AG04450 (cell line): ENCODE measurements at regions of chr1 and their contacts with region 1.

Region 1: GRCh38 chr1:205977402-205978014 is 25.7 kb downstream of the RAB7B start:
- DNase-seq: peak; percentile 65
- H3K4me3 ChIP-seq: no peak overlapping the region
- H3K27ac ChIP-seq: no peak overlapping the region
- H3K27me3 ChIP-seq: no peaks in the 10 kb centered on the region
- CTCF ChIP-seq: peak; percentile 98

Region 2: GRCh38 chr1:204714861-204715511 is 1262.5 kb before region 1 on chr1:
- CTCF ChIA-PET with region 1: no interaction called
- POLR2A ChIA-PET with region 1: no interaction called
- DNase-seq: no peak
- H3K4me3 ChIP-seq: no peak overlapping the region
- H3K27ac ChIP-seq: no peak overlapping the region
- H3K27me3 ChIP-seq: peaks cover 34% of the 10 kb centered on the region
- CTCF ChIP-seq: no peak

Region 3: GRCh38 chr1:205658943-205659581 is 318.4 kb before region 1 on chr1:
- CTCF ChIA-PET with region 1: interaction called, 163 read pairs
- POLR2A ChIA-PET with region 1: interaction called, 6 read pairs
- DNase-seq: no peak
- H3K4me3 ChIP-seq: no peak overlapping the region
- H3K27ac ChIP-seq: no peak overlapping the region
- H3K27me3 ChIP-seq: no peaks in the 10 kb centered on the region
- CTCF ChIP-seq: peak; percentile 88

Region 4: DNA sequence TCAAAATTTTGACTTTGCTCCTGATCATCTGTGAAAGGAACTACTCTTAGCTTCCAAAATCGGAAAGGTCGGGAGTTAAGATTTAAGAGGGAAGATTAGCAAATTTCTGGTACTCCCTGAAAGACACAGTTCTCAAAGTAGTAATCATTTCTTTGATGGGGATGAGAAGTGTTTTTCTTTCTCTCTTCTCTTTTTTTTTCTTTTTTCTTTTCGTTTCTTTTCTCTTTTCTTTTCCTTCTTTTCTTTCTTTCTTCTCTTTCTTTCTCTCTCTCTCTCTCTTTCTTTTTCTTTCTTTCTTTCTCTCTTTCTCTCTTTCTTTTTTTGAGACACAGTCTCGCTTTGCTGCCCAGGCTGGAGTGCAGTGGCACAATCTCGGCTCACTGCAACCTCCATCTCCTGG is 197.2 kb before region 1 on chr1:
- CTCF ChIA-PET with region 1: interaction called, 42 read pairs
- POLR2A ChIA-PET with region 1: interaction called, 5 read pairs
- DNase-seq: no peak
- H3K4me3 ChIP-seq: no peak overlapping the region
- H3K27ac ChIP-seq: no peak overlapping the region
- H3K27me3 ChIP-seq: peaks cover 2% of the 10 kb centered on the region
- CTCF ChIP-seq: no peak

Region 5: DNA sequence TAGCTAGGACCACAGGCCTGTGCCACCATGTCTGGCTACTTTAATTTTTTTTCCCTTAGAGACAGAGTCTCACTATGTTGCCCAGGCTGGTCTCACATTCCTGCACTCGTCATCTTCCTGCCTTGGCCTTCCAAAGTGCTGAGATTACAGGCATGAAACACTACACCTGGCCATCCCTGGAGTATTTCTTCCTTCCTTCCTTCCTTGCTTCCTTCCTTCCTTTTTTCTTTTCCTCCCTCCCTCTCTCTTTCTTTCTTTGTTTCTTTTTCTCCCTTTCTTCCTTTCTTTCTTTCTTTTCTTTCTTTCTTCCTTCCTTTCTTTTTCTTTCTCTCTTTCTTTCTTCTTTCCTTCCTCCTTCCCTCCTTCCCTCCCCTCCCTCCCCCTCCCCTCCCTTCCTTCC is 81.2 kb before region 1 on chr1:
- CTCF ChIA-PET with region 1: interaction called, 10 read pairs
- POLR2A ChIA-PET with region 1: no interaction called
- DNase-seq: no peak
- H3K4me3 ChIP-seq: no peak overlapping the region
- H3K27ac ChIP-seq: no peak overlapping the region
- H3K27me3 ChIP-seq: peaks cover 2% of the 10 kb centered on the region
- CTCF ChIP-seq: no peak

Region 6: DNA sequence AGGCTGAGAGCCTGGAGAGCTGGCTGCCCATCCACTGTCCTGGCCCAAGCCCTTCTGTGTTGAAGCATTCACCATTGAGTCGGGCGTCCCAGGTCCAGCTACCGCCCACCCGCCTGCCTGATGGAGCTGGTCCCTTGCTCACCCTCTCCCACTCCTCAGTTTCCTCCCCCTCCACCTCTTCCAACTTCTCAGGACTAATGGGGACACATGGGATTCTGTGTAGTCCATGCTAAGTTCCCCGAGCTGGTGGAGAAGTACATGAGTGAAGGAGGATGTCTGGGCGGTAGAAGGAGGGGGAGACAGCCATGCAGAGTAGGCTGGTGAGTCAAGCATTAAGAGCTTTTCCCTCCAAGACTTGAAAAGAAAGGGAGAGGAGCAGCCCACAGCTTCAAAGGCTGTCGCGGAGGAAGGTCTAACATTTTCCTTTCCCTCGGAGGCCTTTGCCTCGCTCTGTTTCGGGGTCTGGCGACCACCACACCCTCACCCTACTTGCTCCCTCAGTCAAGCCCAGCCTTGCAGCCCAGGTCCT is 34.8 kb before region 1 on chr1:
- CTCF ChIA-PET with region 1: interaction called, 22 read pairs
- POLR2A ChIA-PET with region 1: no interaction called
- DNase-seq: no peak
- H3K4me3 ChIP-seq: no peak overlapping the region
- H3K27ac ChIP-seq: no peak overlapping the region
- H3K27me3 ChIP-seq: peaks cover 51% of the 10 kb centered on the region
- CTCF ChIP-seq: no peak

Region 7: DNA sequence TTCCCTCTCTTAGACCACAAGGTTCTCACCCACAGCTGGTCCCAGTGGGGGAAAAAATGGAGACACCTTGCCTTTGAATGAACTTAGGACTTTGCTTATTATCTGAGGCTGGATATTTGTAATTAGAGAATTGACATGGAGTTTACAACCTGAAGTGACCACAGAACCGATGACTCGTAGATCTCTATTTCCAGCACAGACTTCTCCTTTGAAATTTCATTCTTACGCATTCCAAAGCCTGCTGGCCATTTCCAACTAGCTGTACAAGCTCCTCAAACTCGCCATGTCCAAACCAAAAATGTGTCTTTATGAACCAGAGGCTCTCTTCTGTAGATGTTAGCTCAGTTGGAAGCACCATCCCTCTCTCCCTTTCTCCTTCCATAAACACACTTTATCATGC is 13.7 kb after region 1 on chr1:
- CTCF ChIA-PET with region 1: interaction called, 58 read pairs
- POLR2A ChIA-PET with region 1: interaction called, 3 read pairs
- DNase-seq: peak; percentile 15
- H3K4me3 ChIP-seq: no peak overlapping the region
- H3K27ac ChIP-seq: no peak overlapping the region
- H3K27me3 ChIP-seq: no peaks in the 10 kb centered on the region
- CTCF ChIP-seq: no peak

Region 8: DNA sequence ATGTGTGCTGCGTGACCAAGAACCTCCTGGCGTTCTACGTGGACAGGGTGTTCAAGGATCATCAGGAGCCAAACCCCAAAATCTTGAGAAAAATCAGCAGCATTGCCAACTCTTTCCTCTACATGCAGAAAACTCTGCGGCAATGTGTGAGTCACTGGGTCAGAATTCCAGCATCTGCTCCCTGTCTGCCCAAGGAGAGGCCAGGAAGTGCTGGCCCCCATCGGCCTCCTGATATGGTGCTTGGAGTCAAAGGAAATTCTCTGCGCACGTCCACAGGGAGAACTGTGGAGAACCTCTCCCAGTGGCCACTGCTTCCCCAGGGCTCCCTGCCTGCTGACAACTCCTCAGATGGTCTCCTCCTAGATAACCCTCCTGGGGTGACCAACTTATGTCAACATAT is 862.3 kb after region 1 on chr1:
- CTCF ChIA-PET with region 1: no interaction called
- POLR2A ChIA-PET with region 1: no interaction called
- DNase-seq: peak; percentile 79
- H3K4me3 ChIP-seq: no peak overlapping the region
- H3K27ac ChIP-seq: peak overlapping the region; percentile 82
- H3K27me3 ChIP-seq: no peaks in the 10 kb centered on the region
- CTCF ChIP-seq: no peak